AG04450 (cell line): ENCODE measurements at regions of chr20 and their contacts with region 1.

Region 1: DNA sequence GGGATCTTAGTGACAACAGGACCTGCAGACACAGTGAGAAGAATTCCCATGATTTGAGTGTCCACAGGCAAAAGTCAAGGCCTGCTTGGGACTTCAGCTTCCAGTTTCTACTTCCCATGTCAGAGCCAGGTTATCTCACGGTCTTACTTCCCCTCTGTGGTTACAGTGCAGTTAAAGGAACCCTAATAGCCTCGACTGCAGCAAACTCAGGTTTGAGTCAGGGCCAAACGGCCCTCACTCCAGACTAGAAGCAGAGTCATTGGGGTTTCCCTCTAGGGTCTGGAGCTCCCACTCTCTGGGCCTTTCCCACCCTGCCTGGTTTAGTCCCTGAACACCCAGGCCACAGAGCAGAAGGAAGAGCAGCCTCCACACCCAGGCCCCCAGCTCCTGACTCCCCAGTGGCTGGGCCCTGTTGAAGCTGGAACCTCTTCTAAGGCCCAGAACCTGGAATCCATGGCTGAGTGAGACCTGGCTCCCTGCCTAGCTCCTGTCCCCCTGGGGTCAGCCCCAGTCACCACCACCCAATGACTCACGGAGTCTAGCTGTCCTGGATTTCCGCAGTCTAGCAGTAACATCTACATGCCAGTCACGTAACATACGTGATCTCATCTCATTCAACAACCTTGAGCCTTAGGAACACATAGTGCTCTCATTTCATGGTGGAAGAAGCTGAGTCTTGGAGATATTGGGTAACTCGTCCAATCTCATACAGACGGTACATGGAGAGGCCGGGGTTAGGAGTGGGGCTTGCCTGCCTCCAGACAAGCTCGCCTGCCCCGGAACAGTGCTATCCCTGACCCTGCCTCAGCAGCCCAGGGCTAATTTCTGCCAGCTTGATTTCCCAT is 9.2 kb upstream of the GHRH start:
- DNase-seq: no peak
- H3K4me3 ChIP-seq: no peak overlapping the region
- H3K27ac ChIP-seq: no peak overlapping the region
- H3K27me3 ChIP-seq: peaks cover 6% of the 10 kb centered on the region
- CTCF ChIP-seq: no peak

Region 2: DNA sequence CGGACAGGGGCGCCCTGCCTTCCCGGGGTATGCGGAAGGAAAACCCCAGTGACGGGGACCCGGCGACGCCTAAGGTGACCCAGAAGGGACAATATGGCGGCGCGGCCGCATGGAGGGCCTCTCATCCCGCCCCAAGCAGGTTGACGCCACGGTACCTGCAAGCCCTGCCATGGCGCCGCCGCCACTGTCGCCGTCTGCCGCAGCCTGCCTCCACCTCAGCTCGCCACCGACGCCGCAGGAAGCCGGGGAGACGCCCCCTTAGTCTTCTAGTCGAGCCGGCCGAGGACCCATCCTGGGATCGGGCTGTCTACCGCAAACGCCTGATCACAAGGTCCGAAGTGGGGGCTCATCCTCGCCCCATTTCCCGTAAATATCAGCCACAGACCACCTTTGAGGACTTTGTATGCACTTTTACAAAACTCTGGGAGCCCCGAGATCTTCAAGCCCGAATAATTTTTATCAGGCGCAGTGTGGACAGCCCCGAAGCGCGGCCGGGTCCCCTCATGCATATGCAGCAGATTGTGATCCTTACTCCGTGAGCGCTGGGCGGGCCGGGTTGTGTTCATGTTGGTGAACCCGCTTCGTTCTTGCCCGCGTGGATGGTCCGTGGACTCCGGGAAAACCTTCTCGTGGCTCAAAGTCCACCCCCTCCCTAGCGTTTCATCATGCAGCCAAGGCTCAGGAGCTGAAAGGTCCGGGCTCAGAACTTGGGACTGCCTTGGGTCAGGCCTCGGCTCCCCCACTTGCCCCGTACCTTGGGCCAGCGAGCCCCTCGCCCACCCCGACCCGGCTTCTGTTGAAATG is 257.0 kb after region 1 on chr20 and contains the start of gene BLCAP:
- CTCF ChIA-PET with region 1: interaction called, 75 read pairs
- POLR2A ChIA-PET with region 1: no interaction called
- DNase-seq: peak; percentile 64
- H3K4me3 ChIP-seq: peak within 1 kb of the TSS; percentile 97
- H3K27ac ChIP-seq: peak within 1 kb of the TSS; percentile 93
- H3K27me3 ChIP-seq: no peaks in the 10 kb centered on the region
- CTCF ChIP-seq: no peak
- polyA plus RNA-seq, gene BLCAP: 88.9 and 94.1 TPM in 2 replicates

Region 3: DNA sequence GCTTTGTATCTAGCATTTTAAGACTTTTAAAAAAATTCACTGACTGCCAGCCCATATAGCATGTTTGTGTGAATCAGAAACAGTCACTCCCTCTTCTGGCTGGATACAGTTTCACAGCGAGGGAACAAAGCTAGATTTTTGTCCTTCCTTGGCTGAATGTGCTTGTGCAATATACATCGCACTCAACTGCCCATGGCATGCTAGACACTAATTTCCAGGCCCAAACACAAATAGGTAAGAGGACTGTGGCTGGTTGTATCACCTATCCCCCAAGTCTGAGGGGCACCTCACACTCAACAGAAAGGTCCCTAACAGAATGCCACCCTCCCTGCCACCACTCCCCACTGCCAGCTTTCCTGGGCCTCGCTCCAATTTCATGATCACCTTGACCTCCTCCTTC is 273.0 kb after region 1 on chr20:
- CTCF ChIA-PET with region 1: interaction called, 16 read pairs
- POLR2A ChIA-PET with region 1: no interaction called
- DNase-seq: no peak
- H3K4me3 ChIP-seq: no peak overlapping the region
- H3K27ac ChIP-seq: no peak overlapping the region
- H3K27me3 ChIP-seq: peaks cover 9% of the 10 kb centered on the region
- CTCF ChIP-seq: peak; percentile 61